PC-9 (cell line): ENCODE measurements at regions of chr4 and their contacts with region 1.

Region 1: DNA sequence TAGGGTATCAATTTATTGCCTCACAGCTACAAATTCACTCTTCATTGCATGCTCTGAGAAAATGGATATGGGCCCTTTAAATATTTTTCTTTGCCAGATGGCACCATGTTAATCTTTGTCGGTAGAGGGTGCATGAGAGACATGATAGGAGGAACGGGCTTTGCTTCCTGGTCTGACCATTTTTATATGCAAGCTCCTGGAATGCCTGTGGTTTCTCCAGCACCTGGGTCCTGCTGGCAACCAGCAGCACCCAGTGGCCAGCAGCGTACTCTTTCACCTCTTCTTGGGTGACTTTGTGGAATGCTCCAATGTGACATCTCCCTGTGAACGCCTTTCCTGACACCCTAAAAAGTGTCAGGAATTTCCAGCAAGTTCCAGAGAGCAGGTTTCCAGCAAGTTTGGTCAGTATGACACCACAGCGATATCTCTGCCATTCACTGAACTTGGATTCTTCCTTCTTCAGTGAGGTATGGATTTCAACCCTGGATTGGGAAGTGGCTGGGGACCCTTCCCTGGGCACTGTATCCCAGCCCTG is 140.3 kb upstream of the PGRMC2 start:
- DNase-seq: peak; percentile 80 to 89
- H3K4me3 ChIP-seq: no peak overlapping the region
- H3K27ac ChIP-seq: no peak overlapping the region
- H3K4me1 ChIP-seq: peaks cover 10% of the 10 kb centered on the region; the same call in 1 of the 2 replicates
- H3K27me3 ChIP-seq: no peaks in the 10 kb centered on the region
- CTCF ChIP-seq: peak; percentile 72

Region 2: DNA sequence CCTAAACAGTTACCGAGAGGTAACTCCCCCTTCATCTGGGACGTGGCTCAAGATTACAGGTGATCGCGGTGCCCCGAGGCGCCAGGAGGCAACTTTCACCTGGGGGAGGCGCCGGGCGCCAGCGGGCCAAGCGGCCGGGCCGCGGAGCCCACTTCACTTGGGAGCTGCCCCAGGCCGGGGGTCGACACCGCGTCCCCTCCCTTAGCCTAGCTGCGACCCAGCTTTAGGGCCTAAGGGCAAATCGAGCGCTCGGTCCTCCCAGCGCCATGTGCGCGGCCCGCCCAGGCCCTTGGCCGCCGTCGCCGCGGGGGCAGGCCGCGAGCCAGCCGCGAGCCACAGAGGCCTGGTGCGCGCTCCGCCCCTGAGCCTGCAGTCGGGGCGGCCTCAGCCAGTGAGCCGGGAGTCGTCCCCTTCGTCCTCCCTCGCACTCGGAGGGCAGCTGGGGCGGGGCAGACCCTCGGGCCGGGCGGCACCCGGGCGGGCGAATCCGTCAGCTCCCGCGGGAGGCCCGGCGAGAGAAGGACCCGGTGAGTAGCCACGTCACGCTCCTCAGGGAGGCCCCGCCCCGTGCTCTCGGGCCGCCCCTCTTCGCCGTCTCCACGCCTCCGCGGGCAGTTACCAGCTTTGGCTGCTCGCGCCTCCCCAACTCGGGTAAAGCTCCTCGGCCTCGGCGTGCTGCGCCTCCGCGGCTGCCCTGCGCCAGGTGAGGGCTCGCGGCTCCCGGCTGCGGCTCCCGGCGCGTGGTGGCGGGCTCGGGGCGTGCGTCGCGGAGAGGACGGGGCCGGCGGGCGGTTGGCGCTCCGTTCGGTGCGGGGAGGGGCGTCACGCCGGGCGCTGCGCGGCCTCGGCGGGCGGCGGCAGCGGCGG is 367.0 kb before region 1 on chr4 and contains the start of gene LARP1B:
- CTCF ChIA-PET with region 1: no interaction called
- POLR2A ChIA-PET with region 1: no interaction called
- intact Hi-C with region 1: loop called (anchors 5 kb)
- DNase-seq: peak; percentile 82 to 98
- H3K4me3 ChIP-seq: peak within 1 kb of the TSS; percentile 88
- H3K27ac ChIP-seq: peak within 1 kb of the TSS; percentile 93
- H3K4me1 ChIP-seq: peaks cover 4% of the 10 kb centered on the region; the same call in 1 of the 2 replicates
- H3K27me3 ChIP-seq: no peaks in the 10 kb centered on the region
- CTCF ChIP-seq: no peak
- total RNA-seq, gene LARP1B: 17.7 and 22.0 TPM in 2 replicates

Region 3: DNA sequence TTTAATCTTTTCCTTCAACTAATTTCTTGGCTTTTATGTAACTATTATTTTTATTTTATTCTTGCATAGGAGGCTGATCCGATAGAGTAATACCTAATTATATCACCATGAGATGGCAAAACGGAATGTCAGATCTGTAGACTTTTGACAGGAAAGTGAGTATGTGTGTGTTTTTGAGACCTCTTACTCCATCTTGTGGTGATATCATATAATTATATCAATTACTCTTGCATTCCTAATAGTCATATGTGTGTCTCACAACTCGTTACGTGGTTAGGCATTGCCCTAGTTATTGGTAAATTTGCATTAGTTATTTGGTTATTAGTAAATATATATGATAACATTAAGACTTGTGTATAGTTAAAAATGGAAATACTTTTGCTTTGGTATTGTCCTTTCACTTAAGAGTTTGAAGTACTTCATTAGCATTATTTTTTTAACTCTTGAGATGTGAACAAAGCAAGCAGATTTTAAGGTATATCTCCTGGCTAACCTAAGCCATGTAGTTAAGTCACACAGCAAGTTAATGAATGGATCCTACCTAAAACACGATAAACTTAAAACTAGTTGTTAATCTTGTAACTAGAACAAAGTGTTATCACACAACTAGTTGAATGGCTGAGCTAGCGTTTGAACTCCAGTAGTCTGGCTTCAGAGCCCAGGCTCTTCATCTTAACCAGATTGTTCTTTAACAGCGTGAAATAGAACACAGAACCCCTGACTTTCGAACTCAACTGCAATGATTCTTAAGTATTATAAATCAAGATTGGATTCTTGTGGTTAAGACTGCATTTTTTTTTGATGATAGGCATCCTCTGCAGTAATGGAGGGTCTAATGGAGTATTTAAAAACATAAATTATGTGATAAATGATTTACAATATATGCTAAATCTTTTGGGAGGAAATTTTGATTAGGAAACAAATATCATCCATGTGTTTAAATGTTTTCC is 207.3 kb before region 1 on chr4:
- CTCF ChIA-PET with region 1: no interaction called
- POLR2A ChIA-PET with region 1: no interaction called
- intact Hi-C with region 1: loop called (anchors 2 kb)
- DNase-seq: peak in 1 of 2 experiments; percentile 37
- H3K4me3 ChIP-seq: no peak overlapping the region
- H3K27ac ChIP-seq: no peak overlapping the region
- H3K4me1 ChIP-seq: no peaks in the 10 kb centered on the region
- H3K27me3 ChIP-seq: no peaks in the 10 kb centered on the region
- CTCF ChIP-seq: peak; percentile 51; the same call in 1 of the 2 replicates

Region 4: DNA sequence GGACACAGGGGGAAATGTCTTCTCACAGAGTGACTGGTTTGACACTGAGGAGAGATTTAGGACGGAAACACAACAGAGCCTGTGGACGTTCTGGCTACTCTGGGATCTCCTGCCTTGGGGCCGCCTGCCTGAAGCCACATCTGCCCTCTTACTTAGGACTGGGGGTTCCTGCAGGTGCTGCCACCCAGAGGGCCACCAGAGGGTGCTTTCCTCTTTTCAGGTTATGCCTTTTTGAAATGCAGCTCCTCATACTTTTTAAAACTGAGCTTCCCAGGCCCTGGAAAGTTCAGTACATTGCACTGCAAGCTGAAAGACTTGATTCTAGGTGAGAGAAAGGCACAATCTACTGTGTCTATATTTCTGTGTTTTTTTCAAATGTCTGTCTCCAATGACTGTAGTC is 48.0 kb before region 1 on chr4:
- CTCF ChIA-PET with region 1: interaction called, 8 read pairs
- POLR2A ChIA-PET with region 1: no interaction called
- intact Hi-C with region 1: loop called (anchors 1 kb)
- DNase-seq: peak in 1 of 2 experiments; percentile 46
- H3K4me3 ChIP-seq: no peak overlapping the region
- H3K27ac ChIP-seq: no peak overlapping the region
- H3K4me1 ChIP-seq: no peaks in the 10 kb centered on the region
- H3K27me3 ChIP-seq: no peaks in the 10 kb centered on the region
- CTCF ChIP-seq: peak; percentile 64

Region 5: GRCh38 chr4:128737098-128737513 is 309.2 kb after region 1 on chr4:
- CTCF ChIA-PET with region 1: no interaction called
- POLR2A ChIA-PET with region 1: no interaction called
- intact Hi-C with region 1: no loop called
- DNase-seq: no peak
- H3K4me3 ChIP-seq: no peak overlapping the region
- H3K27ac ChIP-seq: no peak overlapping the region
- H3K4me1 ChIP-seq: no peaks in the 10 kb centered on the region
- H3K27me3 ChIP-seq: no peaks in the 10 kb centered on the region
- CTCF ChIP-seq: no peak

Region 6: DNA sequence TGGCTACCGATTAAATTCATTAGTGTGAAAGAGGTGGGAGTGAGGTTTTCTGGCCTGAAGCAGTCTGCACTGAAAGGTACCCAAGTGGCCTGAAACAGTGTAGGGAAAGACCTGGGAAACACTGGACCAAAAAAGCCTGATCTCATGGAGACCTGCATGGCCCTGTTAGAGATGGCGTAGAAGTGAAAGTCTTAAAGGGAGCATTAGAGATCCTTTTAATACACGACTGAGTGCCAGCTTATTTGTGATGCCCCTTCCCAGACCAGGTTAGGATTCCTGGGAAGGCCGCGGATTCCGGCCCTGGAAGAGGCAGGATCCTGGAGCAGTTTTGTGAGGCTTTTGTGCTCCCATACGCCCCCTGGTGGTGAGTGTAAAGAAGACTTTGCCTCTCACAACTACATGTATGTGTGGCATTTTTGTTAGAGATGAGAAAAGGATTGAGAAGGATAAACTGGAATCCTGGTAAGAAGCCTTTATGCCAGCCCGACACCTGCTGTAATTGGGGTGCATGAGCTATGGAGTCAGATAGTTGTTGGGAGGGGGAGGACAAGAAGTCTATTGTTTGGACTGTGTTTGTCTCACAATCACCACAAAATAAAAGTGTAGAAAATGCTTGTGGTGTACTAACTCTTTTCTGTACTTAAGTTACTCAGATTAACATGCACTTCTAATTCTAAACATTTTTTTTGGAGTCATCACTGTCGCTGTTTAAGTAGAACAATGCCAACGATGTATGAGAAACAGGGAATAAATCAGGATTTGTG is 435.6 kb after region 1 on chr4:
- CTCF ChIA-PET with region 1: no interaction called
- POLR2A ChIA-PET with region 1: no interaction called
- intact Hi-C with region 1: loop called (anchors 1 kb)
- DNase-seq: peak in 1 of 2 experiments; percentile 59
- H3K4me3 ChIP-seq: no peak overlapping the region
- H3K27ac ChIP-seq: no peak overlapping the region
- H3K4me1 ChIP-seq: no peaks in the 10 kb centered on the region
- H3K27me3 ChIP-seq: no peaks in the 10 kb centered on the region
- CTCF ChIP-seq: peak; percentile 86